Activated CD4-positive, alpha-beta memory T cell treated with anti-CD3 and anti-CD28 coated beads, Interleukin-2, amount 10 ng/mL, durations not matched to agents 7 days and 5 days (primary cell): ENCODE measurements at regions of chr21 and their contacts with region 1.

Region 1: DNA sequence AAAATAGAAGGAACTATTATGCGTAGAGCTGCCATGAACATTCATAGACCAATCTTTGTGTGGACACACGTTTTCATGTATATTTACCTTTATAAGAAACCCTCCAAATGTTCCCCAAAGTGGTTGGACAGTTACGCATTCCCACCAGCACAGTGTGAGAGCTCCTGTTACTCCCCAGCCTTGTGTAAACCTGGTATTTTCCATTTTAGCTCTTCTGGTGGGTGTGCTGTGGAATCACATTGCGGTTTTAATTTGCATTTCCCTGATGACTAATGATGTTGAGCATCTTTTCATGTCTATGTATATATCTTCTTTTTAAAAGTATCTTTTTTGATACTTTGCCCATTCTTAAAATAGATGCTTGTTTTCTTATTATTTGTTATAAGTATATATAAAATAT is 3.2 kb upstream of the UBASH3A start:
- DNase-seq: no peak
- H3K4me3 Mint-ChIP-seq: no peak overlapping the region
- H3K27ac Mint-ChIP-seq: peak overlapping the region; percentile 29
- H3K4me1 Mint-ChIP-seq: peaks cover 53% of the 10 kb centered on the region
- H3K27me3 Mint-ChIP-seq: no peaks in the 10 kb centered on the region

Region 2: DNA sequence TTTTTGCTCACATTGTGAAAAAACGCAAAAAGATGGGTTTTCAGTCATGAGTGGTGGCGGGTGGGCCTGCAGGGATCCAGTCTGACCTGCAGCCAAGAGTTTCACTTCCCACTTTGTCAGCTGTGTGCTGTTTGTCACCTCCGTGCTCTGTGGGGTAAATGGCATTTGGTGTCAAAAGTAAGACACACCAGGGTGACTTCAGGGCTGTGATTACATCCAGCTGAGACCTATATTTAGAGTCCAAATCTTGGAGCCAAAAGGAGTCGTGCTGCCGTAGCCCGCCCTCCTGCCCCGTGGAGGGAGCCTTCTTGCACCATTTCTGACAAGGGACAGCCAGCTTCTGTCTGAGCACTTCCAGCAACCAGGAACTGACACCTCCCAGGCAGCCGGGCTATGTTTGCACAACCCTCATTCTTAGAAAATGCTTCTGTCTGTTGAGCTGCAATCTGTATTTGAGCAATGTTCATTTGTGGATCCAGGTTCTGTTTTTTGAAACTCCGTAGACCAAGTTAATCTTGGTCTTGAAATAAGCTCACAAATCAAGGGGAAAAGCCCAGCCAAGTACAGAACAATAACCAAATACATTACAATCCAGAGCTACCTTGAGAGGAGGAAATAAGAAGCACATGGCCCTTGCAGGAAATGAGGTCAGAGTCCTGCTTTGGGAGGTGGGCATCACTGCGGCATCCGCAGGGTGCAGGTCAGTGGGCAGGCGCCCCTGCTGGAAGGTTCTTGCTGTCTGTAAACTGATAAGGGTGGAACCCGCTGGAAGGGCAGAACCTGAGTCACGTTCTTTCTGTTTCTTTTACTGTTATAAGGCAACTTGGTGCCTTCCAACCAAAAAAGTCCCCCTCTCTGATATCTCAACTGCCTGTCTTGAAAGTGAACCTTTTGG is 167.2 kb before region 1 on chr21:
- CTCF ChIA-PET with region 1: no interaction called
- POLR2A ChIA-PET with region 1: interaction called, 23 read pairs
- DNase-seq: peak; percentile 87
- H3K4me3 Mint-ChIP-seq: peak overlapping the region; percentile 33
- H3K27ac Mint-ChIP-seq: peak overlapping the region; percentile 94
- H3K4me1 Mint-ChIP-seq: peaks cover 96% of the 10 kb centered on the region
- H3K27me3 Mint-ChIP-seq: no peaks in the 10 kb centered on the region

Region 3: GRCh38 chr21:42381334-42381984 is 19.1 kb before region 1 on chr21:
- CTCF ChIA-PET with region 1: interaction called, 21 read pairs
- POLR2A ChIA-PET with region 1: interaction called, 7 read pairs
- DNase-seq: peak; percentile 60
- H3K4me3 Mint-ChIP-seq: no peak overlapping the region
- H3K27ac Mint-ChIP-seq: no peak overlapping the region
- H3K4me1 Mint-ChIP-seq: peaks cover 24% of the 10 kb centered on the region
- H3K27me3 Mint-ChIP-seq: no peaks in the 10 kb centered on the region

Region 4: DNA sequence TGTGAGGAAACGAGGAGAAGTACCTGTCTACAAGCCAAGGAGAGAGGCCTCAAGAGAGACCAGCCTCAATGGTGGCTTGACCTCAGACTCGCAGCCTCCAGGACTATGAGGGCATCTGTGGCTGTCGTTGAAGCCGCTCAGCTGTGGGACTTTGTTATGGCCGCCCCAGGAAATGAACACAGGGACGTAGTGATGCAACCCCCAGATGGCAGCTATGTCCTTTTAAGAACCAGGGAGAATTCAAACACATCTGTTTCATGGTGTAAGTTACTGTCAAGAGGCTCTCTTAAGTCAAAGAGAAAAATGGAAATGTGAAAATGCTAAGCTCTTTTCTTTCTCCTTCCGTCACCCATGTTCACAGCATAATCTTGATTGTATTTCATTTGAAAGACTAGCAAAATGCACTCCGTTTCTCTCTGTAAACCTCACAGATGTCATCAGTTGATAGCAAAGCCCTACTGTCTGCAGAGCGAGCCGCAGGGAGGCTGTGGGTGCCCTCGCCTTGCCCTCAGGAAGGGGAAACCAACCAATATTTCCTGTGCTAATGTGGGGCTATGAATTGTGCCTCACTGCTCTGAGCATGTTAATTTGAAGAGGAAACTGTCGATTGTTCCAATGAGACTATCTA is 24.5 kb after region 1 on chr21:
- CTCF ChIA-PET with region 1: interaction called, 51 read pairs
- POLR2A ChIA-PET with region 1: interaction called, 431 read pairs
- DNase-seq: peak; percentile 90
- H3K4me3 Mint-ChIP-seq: peak overlapping the region; percentile 55
- H3K27ac Mint-ChIP-seq: peak overlapping the region; percentile 85
- H3K4me1 Mint-ChIP-seq: peaks cover 71% of the 10 kb centered on the region
- H3K27me3 Mint-ChIP-seq: no peaks in the 10 kb centered on the region

Region 5: DNA sequence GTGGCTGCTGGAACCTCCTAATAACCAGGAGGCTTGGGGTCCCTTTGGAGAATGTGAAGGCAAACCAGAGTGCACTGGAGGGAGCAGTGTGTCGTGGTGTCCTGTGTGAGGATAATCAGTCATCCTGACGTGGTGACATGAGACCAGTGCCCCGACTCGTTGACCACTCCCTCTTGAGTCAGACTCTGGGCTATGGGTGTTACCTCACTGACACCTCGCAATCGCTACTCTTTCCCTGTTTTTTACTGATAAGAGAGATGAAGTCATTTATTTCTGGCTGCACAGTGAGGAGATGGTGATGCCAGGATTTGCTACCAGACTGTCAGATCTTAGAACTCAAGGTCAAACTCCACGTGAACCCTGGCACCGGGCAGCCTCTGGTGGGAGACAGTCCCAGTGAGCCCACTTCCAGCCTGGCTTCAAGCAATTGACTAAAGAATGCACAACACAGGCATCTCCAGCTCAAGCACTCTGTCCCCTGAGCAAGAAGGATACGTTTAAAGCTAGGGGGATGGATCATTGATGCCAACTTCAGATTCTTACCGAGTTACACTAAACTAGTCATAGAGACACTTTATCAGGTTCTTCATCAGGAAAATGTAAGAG is 33.5 kb after region 1 on chr21:
- CTCF ChIA-PET with region 1: interaction called, 3 read pairs
- POLR2A ChIA-PET with region 1: interaction called, 431 read pairs
- DNase-seq: no peak
- H3K4me3 Mint-ChIP-seq: no peak overlapping the region
- H3K27ac Mint-ChIP-seq: no peak overlapping the region
- H3K4me1 Mint-ChIP-seq: peaks cover 44% of the 10 kb centered on the region
- H3K27me3 Mint-ChIP-seq: no peaks in the 10 kb centered on the region

Region 6: DNA sequence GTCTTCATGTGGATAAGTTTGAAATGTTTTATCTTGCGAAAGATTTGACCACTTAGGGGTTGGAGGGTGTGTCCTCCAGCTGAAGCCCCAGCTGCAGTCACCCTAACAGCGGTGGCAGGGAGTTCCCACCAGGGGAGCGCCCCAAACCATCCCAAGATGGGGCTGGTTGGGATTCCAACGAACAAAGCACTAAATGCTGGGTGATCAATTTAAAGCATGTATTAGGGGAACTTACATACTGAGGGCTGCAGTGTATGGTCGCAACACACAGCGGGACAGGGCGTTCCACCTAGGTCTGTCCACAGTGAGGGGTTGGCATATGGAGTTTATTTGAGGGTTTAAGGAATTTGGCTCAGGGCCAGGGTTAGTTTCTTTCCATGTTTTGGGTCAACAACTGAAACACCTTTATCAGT is 139.4 kb after region 1 on chr21:
- CTCF ChIA-PET with region 1: no interaction called
- POLR2A ChIA-PET with region 1: no interaction called
- DNase-seq: no peak
- H3K4me3 Mint-ChIP-seq: no peak overlapping the region
- H3K27ac Mint-ChIP-seq: no peak overlapping the region
- H3K4me1 Mint-ChIP-seq: no peaks in the 10 kb centered on the region
- H3K27me3 Mint-ChIP-seq: no peaks in the 10 kb centered on the region

Region 7: DNA sequence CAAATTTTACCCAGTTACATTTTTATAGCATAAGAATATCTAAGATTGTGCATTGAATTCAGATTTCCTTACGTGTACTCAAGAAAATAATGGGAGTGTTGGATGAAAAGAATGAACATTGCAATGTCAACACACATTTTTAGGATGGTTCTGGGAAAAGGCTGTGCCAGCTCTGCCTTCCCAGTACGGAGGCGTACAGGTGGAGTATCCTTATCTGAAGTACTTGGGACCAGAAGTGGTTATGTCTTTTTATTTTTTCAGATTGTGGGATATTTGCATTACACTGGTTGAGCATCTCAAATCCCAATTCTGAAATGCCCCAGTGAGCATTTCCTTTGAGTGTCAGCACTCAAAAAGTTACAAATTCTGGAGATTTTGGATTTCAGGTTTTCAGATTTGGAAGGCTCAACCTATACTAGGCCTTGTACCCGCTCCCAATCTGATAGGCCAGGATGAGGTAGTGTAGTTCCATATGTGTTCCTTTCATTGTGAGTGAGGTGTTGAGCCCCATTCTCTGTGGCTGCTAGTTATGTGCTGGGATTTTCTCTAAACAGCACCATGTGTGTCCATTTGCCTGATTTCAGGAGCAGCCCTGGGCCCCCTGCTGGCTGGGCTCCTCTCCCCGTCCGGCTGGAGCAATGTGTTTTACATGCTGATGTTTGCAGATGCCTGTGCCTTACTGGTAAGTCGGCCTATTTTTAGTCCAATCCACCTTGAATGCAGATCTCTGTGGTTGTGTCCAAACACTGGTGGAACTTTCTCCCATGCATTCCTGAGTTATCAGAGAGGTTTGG is 173.9 kb after region 1 on chr21:
- CTCF ChIA-PET with region 1: no interaction called
- POLR2A ChIA-PET with region 1: no interaction called
- DNase-seq: no peak
- H3K4me3 Mint-ChIP-seq: no peak overlapping the region
- H3K27ac Mint-ChIP-seq: no peak overlapping the region
- H3K4me1 Mint-ChIP-seq: no peaks in the 10 kb centered on the region
- H3K27me3 Mint-ChIP-seq: no peaks in the 10 kb centered on the region